Posterior cingulate gyrus (tissue), 11 donors: ENCODE measurements at regions of chr7 and their contacts with region 1.

Region 1: GRCh38 chr7:13990984-13991790 is 1.7 kb upstream of the ETV1 start:
- DNase-seq: peak; percentile 82 to 98 (median 88)

Region 2: GRCh38 chr7:14457568-14458453 is 466.6 kb after region 1 on chr7:
- intact Hi-C with region 1: loop called (anchors 5 kb)
- DNase-seq: peak in 9 of 10 donors; percentile 33 to 93 (median 66)